CD4-positive, alpha-beta memory T cell (primary cell): ENCODE measurements at regions of chr12 and their contacts with region 1.

Region 1: GRCh38 chr12:50696931-50697330 is 67.0 kb upstream of the ATF1 start:
- DNase-seq: no peak
- H3K4me3 ChIP-seq: no peak overlapping the region
- H3K4me3 Mint-ChIP-seq: no peak overlapping the region
- H3K27ac ChIP-seq: no peak overlapping the region
- H3K27ac Mint-ChIP-seq: peak overlapping the region in 1 of 7 donors; percentile 3
- H3K4me1 ChIP-seq: no peaks in the 10 kb centered on the region
- H3K4me1 Mint-ChIP-seq: no peaks in the 10 kb centered on the region
- H3K27me3 ChIP-seq: no peaks in the 10 kb centered on the region
- H3K27me3 Mint-ChIP-seq: no peaks in the 10 kb centered on the region

Region 2: DNA sequence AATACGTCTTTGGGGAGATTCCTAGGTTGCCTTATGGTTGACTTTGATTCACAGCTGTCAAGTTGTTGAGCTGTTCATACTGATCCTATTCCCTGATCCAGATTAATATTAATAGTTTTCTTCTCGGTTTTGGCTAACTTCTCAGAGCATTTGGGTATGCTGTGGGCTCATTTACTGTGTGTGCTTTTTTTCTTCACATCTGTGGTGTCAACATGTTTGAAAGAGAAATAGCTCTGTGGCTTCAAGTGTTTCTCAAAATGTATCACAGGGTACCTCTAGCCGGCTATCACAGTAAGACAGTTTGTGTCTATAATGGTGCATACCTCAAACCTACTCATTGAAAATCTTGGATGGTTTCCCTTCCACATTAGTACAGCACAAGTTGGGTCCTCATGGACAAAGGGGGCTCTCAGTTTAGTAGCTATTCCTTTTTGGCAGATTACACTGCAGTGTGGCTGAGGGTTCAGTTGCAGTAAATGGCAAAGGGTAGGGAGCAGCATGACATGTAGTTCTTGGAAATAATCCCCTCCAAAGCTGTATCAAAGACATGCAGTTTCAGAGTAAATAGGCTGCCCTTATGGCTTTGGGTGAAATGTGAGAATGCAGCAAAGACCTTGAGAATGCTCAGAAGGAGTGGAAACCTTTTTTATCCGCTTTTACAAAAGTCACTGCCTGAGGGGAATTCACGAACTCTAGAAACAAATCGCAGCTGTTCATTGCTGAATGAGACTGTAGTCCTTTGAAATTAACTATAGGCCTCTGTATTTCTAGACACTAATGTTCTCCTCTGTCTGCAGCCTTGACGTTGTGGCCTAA is 35.4 kb before region 1 on chr12:
- CTCF ChIA-PET with region 1: no interaction called
- POLR2A ChIA-PET with region 1: no interaction called
- intact Hi-C with region 1: loop called (anchors 1 kb)
- DNase-seq: no peak
- H3K4me3 ChIP-seq: no peak overlapping the region
- H3K4me3 Mint-ChIP-seq: no peak overlapping the region
- H3K27ac ChIP-seq: no peak overlapping the region
- H3K27ac Mint-ChIP-seq: peak overlapping the region in 1 of 7 donors; percentile 6
- H3K4me1 ChIP-seq: no peaks in the 10 kb centered on the region
- H3K4me1 Mint-ChIP-seq: peaks cover 0 to 7% (median 3%) of the 10 kb centered on the region in 4 donors
- H3K27me3 ChIP-seq: no peaks in the 10 kb centered on the region
- H3K27me3 Mint-ChIP-seq: no peaks in the 10 kb centered on the region

Region 3: GRCh38 chr12:50786498-50787231 is 89.7 kb after region 1 on chr12:
- CTCF ChIA-PET with region 1: no interaction called
- POLR2A ChIA-PET with region 1: no interaction called
- intact Hi-C with region 1: no loop called
- DNase-seq: no peak
- H3K4me3 ChIP-seq: no peak overlapping the region
- H3K4me3 Mint-ChIP-seq: no peak overlapping the region
- H3K27ac ChIP-seq: no peak overlapping the region
- H3K27ac Mint-ChIP-seq: peak overlapping the region in 5 of 7 donors; percentile 10 to 62 (median 57)
- H3K4me1 ChIP-seq: peaks cover 8% of the 10 kb centered on the region
- H3K4me1 Mint-ChIP-seq: peaks cover 22 to 29% (median 25%) of the 10 kb centered on the region in 4 donors
- H3K27me3 ChIP-seq: no peaks in the 10 kb centered on the region
- H3K27me3 Mint-ChIP-seq: no peaks in the 10 kb centered on the region